GM12878 (cell line): ENCODE measurements at regions of chr2 and their contacts with region 1.

Region 1: GRCh38 chr2:120174963-120175581 is 48.1 kb downstream of the TMEM185B start:
- DNase-seq: no peak
- ATAC-seq: no peak
- H3K4me3 ChIP-seq: no peak overlapping the region
- H3K27ac ChIP-seq: no peak overlapping the region
- H3K4me1 ChIP-seq: peaks cover 28% of the 10 kb centered on the region
- H3K27me3 ChIP-seq: no peaks in the 10 kb centered on the region
- CTCF ChIP-seq: peak; percentile 64 to 74 (median 64)
- EP300 ChIP-seq: no peak
- POLR2A ChIP-seq: no peak
- RAD21 ChIP-seq: peak; percentile 82

Region 2: GRCh38 chr2:119702918-119703401 is 472.1 kb before region 1 on chr2:
- CTCF ChIA-PET with region 1: interaction called, 116 read pairs
- POLR2A ChIA-PET with region 1: no interaction called
- RAD21 ChIA-PET with region 1: interaction called, 38 read pairs
- SMC1A ChIA-PET with region 1: interaction called, 27 read pairs
- in situ Hi-C with region 1: loop called (anchors 5 kb)
- intact Hi-C with region 1: loop called (anchors 1 kb)
- DNase-seq: no peak
- ATAC-seq: peak; percentile 97
- H3K4me3 ChIP-seq: no peak overlapping the region
- H3K27ac ChIP-seq: no peak overlapping the region
- H3K4me1 ChIP-seq: peaks cover 14% of the 10 kb centered on the region
- H3K27me3 ChIP-seq: no peaks in the 10 kb centered on the region; a peak in 1 of 4 replicates
- CTCF ChIP-seq: peak; percentile 96 to 99 (median 98)
- EP300 ChIP-seq: no peak
- POLR2A ChIP-seq: no peak
- RAD21 ChIP-seq: peak; percentile 88

Region 3: DNA sequence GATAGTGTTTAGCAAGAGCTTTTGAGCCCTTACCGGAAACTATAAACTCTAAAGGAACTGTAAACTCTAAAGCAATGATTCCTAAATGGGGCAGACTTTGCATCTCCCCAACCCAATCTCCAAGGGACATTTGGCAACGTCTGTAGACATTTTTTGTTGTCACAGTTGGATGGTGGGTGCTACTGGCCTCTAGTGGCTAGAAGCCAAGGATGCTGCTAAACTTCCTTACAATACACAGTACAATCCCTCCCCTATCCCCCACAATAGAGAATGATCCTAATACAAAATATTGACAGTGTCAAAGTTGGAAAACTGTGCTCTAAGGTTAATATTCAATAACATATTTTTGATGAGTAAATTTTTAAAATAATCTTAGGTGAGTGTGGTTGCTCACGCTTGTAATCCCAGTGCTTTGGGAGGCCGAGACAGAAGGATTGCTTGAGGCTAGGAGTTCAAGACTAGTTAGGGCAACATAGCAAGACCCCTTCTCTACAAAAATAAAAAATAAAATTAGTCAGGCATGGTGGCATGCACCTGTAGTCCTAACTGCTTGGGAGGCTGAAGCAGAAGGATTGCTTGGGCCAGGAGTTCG is 348.6 kb before region 1 on chr2:
- CTCF ChIA-PET with region 1: interaction called, 69 read pairs
- POLR2A ChIA-PET with region 1: no interaction called
- RAD21 ChIA-PET with region 1: interaction called, 23 read pairs
- SMC1A ChIA-PET with region 1: interaction called, 8 read pairs
- in situ Hi-C with region 1: no loop called
- intact Hi-C with region 1: loop called (anchors 5 kb)
- DNase-seq: no peak
- ATAC-seq: peak; percentile 90
- H3K4me3 ChIP-seq: no peak overlapping the region
- H3K27ac ChIP-seq: no peak overlapping the region
- H3K4me1 ChIP-seq: no peaks in the 10 kb centered on the region
- H3K27me3 ChIP-seq: no peaks in the 10 kb centered on the region
- CTCF ChIP-seq: peak; percentile 65 to 75 (median 67)
- EP300 ChIP-seq: no peak
- POLR2A ChIP-seq: no peak
- RAD21 ChIP-seq: peak; percentile 60

Region 4: DNA sequence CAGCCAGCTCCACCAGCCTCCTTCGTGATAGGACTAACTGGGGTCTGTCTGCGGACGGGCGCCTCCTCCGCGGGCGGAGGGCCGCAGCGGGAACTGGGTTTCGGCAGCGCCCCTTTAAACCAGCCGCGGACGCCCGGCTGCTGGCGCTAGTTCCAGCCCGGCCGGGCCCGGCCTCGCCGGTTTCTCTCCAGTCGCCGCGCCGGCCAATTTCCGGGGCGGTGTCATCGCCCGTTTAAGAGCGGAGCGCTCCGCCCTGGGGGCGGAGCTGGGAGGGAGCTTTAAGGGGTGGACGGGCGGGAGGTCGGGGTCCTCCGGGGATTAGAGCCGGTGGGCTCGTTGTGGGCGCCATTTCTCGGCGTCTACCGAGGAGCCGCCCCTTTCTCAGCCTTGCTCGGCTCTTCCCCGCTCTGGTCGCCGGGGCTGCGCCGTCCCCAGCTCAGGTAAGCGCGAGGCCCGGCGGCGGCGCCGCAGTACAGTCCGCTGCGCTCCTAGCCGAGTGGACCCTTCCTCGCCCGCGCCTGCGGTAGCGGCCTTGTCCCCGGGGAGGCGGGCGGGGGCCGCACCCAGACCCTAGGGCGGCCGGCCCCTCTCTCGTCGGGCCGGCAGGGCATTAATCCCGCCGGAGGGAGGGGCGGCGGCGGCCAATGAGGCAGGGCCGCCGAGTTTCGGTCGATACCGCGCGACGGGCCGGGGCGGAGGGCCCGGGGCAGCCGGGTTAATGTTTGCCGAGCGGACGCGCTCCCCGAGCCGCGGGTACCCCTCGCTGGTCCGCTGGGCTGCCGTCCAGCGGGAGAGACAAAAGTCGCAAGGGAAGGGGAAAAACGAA is 162.1 kb before region 1 on chr2 and contains the start of gene EPB41L5:
- CTCF ChIA-PET with region 1: interaction called, 14 read pairs
- POLR2A ChIA-PET with region 1: no interaction called
- RAD21 ChIA-PET with region 1: interaction called, 7 read pairs
- SMC1A ChIA-PET with region 1: interaction called, 6 read pairs
- in situ Hi-C with region 1: no loop called
- intact Hi-C with region 1: loop called (anchors 5 kb)
- DNase-seq: no peak
- ATAC-seq: peak; percentile 90
- H3K4me3 ChIP-seq: peak within 1 kb of the TSS; percentile 86
- H3K27ac ChIP-seq: peak within 1 kb of the TSS; percentile 64
- H3K4me1 ChIP-seq: peaks cover 5% of the 10 kb centered on the region; the same call in 1 of the 2 replicates
- H3K27me3 ChIP-seq: no peaks in the 10 kb centered on the region
- CTCF ChIP-seq: no peak
- EP300 ChIP-seq: no peak
- POLR2A ChIP-seq: peak; percentile 54; the same call in 1 of the 2 replicates
- RAD21 ChIP-seq: no peak
- polyA plus RNA-seq, gene EPB41L5: 2.1 to 2.9 TPM

Region 5: DNA sequence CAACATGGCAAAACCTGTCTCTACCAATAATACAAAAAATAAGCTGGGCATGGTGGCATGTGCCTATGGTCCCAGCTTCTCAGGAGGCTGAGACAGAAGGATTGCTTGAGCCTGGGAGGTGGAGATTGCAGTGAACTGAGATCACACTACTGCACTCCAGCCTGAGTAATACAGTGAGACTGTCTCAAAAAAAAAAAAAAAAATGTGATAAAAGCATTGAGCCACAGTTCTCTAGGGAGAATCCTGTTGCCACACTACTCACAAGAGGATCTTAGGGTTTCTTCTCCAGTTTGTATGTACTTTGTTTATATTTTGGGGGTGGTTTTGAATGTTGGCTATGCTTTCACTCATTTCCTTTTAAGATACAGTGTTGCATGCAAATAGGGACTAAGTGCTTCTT is 13.9 kb before region 1 on chr2:
- CTCF ChIA-PET with region 1: interaction called, 65 read pairs
- POLR2A ChIA-PET with region 1: interaction called, 3 read pairs
- RAD21 ChIA-PET with region 1: interaction called, 4 read pairs
- SMC1A ChIA-PET with region 1: interaction called, 8 read pairs
- in situ Hi-C with region 1: no loop called
- intact Hi-C with region 1: no loop called
- DNase-seq: no peak
- ATAC-seq: no peak
- H3K4me3 ChIP-seq: no peak overlapping the region
- H3K27ac ChIP-seq: no peak overlapping the region
- H3K4me1 ChIP-seq: no peaks in the 10 kb centered on the region
- H3K27me3 ChIP-seq: no peaks in the 10 kb centered on the region
- CTCF ChIP-seq: no peak
- EP300 ChIP-seq: no peak
- POLR2A ChIP-seq: no peak
- RAD21 ChIP-seq: no peak

Region 6: GRCh38 chr2:120252225-120253021 is 77.4 kb after region 1 on chr2 and contains the start of gene RALB:
- CTCF ChIA-PET with region 1: interaction called, 11 read pairs
- POLR2A ChIA-PET with region 1: interaction called, 5 read pairs
- RAD21 ChIA-PET with region 1: interaction called, 5 read pairs
- SMC1A ChIA-PET with region 1: interaction called, 5 read pairs
- in situ Hi-C with region 1: no loop called
- intact Hi-C with region 1: no loop called
- DNase-seq: peak; percentile 87
- ATAC-seq: peak; percentile 96
- H3K4me3 ChIP-seq: peak within 1 kb of the TSS; percentile 91
- H3K27ac ChIP-seq: peak within 1 kb of the TSS; percentile 51
- H3K4me1 ChIP-seq: peaks cover 7% of the 10 kb centered on the region; the same call in 1 of the 2 replicates
- H3K27me3 ChIP-seq: no peaks in the 10 kb centered on the region
- CTCF ChIP-seq: no peak
- EP300 ChIP-seq: no peak
- POLR2A ChIP-seq: peak; percentile 79
- RAD21 ChIP-seq: no peak
- polyA plus RNA-seq, gene RALB: 8.3 to 15.9 TPM

Region 7: GRCh38 chr2:120632796-120633646 is 457.9 kb after region 1 on chr2:
- CTCF ChIA-PET with region 1: no interaction called
- POLR2A ChIA-PET with region 1: no interaction called
- RAD21 ChIA-PET with region 1: no interaction called
- SMC1A ChIA-PET with region 1: no interaction called
- in situ Hi-C with region 1: no loop called
- intact Hi-C with region 1: no loop called
- DNase-seq: no peak
- ATAC-seq: no peak
- H3K4me3 ChIP-seq: no peak overlapping the region
- H3K27ac ChIP-seq: no peak overlapping the region
- H3K4me1 ChIP-seq: no peaks in the 10 kb centered on the region
- H3K27me3 ChIP-seq: peaks cover 0 to 2% of the 10 kb centered on the region in 2 experiments; a peak in 2 of 4 replicates
- CTCF ChIP-seq: no peak
- EP300 ChIP-seq: no peak
- POLR2A ChIP-seq: no peak
- RAD21 ChIP-seq: no peak